Activated CD8-positive, alpha-beta T cell treated with anti-CD3 and anti-CD28 coated beads, Interleukin-2, amount 10 ng/mL, durations not matched to agents 7 days and 5 days (primary cell): ENCODE measurements at regions of chr6 and their contacts with region 1.

Region 1: DNA sequence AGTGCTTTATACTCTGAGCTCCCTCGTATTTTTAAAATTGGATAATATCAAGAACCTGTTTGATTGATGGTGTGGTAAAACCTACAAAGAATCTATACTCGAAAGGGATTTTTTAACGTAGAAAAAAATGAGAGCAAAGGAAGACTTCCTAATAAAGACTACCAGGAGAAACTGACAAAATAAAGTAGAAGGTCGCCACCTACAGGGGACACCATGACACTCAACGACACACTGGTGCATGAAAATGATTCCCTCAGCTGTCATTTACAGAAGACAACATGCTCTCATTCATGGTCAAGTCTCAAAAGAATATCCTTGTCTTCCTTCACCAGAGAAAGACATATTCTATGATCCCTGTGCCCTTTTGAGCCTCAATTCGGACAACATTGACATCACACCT is 10.1 kb upstream of the NHSL1 start:
- DNase-seq: peak; percentile 68
- ATAC-seq: peak; percentile 75
- H3K4me3 Mint-ChIP-seq: no peak overlapping the region
- H3K27ac Mint-ChIP-seq: no peak overlapping the region
- H3K4me1 Mint-ChIP-seq: peaks cover 5% of the 10 kb centered on the region
- H3K27me3 Mint-ChIP-seq: peaks cover 30% of the 10 kb centered on the region

Region 2: DNA sequence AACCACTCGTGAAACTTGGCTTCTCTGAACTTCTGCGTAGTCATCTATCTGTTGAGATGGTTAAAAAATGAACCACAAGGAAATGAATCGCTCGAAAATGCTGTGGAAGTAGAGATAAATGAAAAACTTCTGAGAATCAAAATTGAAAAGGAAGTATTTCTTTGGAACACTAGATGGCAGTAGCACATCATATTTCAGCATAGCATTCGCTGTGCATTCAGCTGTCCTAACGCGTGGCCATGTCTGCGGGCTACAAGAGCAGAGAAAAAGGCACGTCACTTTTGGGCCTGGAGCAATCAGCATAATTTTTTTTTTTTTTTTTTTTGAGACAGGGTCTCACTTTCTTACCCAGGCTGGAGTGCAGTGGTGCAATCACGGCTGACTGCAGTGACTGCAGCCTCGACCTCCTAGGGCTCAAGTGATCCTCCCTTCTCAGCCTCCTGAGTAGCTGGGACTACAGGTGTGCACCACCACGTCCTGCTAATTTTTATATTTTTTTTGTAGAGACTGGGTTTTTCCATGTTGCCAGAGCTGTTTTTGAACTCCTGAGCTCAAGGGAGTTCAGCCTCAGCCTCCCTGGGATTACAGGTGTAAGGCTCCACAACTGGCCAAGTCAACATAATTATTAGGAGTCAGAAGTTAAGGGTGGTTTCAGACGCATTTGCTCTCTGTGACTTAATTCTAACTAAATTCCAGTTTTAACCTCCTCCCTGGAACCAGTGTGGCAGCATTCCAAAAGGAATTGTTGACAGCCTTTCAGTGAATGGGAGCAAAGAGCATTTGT is 393.3 kb before region 1 on chr6:
- CTCF ChIA-PET with region 1: interaction called, 32 read pairs
- POLR2A ChIA-PET with region 1: no interaction called
- DNase-seq: peak; percentile 58
- ATAC-seq: peak; percentile 83
- H3K4me3 Mint-ChIP-seq: no peak overlapping the region
- H3K27ac Mint-ChIP-seq: no peak overlapping the region
- H3K4me1 Mint-ChIP-seq: peaks cover 6% of the 10 kb centered on the region
- H3K27me3 Mint-ChIP-seq: peaks cover 49% of the 10 kb centered on the region

Region 3: DNA sequence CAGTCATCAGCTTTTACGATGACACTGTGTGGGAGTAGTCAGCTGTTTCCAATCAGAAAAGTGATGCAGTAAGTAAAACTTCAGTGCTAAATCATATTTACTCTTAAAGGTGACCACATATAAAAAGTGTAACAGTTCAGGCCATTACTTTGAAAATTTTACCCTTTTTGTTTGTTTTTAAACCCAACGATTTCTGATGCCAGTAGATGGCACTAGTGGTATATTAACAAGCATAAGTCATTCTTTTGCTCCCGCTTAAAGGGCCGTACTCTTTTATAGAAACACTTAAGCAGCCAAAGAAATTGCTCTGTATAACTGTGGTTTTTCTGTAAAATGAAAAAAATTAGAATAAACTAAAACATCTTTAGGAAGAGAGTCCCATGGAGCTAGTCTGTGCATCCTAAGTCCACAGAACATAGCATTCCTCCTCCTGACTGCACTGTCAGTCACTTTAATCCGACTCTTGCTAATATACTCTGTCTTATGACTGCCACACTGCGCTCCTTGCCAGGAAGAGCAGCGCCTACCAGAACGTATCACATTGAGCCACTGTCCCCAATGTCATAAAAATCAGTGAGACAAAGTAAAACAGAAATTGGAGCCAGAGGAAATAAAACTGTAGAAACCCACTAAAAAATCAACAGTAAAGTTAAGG is 80.3 kb before region 1 on chr6:
- CTCF ChIA-PET with region 1: interaction called, 120 read pairs
- POLR2A ChIA-PET with region 1: interaction called, 3 read pairs
- DNase-seq: peak; percentile 34
- ATAC-seq: peak; percentile 58
- H3K4me3 Mint-ChIP-seq: no peak overlapping the region
- H3K27ac Mint-ChIP-seq: no peak overlapping the region
- H3K4me1 Mint-ChIP-seq: peaks cover 2% of the 10 kb centered on the region
- H3K27me3 Mint-ChIP-seq: no peaks in the 10 kb centered on the region

Region 4: GRCh38 chr6:138440758-138441357 is 68.5 kb before region 1 on chr6:
- CTCF ChIA-PET with region 1: interaction called, 18 read pairs
- POLR2A ChIA-PET with region 1: no interaction called
- DNase-seq: no peak
- ATAC-seq: no peak
- H3K4me3 Mint-ChIP-seq: no peak overlapping the region
- H3K27ac Mint-ChIP-seq: no peak overlapping the region
- H3K4me1 Mint-ChIP-seq: no peaks in the 10 kb centered on the region
- H3K27me3 Mint-ChIP-seq: peaks cover 2% of the 10 kb centered on the region

Region 5: DNA sequence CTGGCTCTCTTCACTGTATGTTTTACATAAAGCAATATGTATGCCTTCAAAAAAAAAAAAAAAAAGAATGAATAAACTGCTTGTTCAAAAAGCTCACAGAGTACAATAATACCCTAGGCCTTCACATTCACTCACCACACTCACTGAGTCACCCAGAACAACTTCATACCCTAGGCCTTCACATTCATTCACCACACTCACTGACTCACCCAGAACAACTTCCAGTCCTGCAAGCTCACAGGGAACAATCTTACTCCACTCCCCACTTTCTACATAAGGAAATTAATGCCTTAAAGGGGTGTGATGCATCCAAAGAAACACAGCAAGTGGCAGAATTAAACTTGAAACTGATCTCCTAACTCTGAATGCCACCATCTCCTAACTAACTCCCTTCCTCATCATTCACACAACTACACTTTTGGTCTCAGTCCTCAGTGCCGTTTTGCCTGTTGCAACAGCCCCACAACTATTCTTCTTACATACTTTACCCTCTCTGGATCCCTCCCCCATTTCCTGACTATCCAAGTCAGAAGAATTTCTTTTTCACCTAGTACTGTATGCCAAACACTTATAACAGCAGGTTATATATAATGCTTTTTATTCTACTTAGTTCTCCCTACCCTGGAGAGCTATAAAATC is 44.2 kb before region 1 on chr6:
- CTCF ChIA-PET with region 1: interaction called, 11 read pairs
- POLR2A ChIA-PET with region 1: no interaction called
- DNase-seq: no peak
- ATAC-seq: no peak
- H3K4me3 Mint-ChIP-seq: no peak overlapping the region
- H3K27ac Mint-ChIP-seq: no peak overlapping the region
- H3K4me1 Mint-ChIP-seq: peaks cover 5% of the 10 kb centered on the region
- H3K27me3 Mint-ChIP-seq: peaks cover 2% of the 10 kb centered on the region

Region 6: GRCh38 chr6:138622967-138623366 is 113.6 kb after region 1 on chr6:
- CTCF ChIA-PET with region 1: no interaction called
- POLR2A ChIA-PET with region 1: no interaction called
- DNase-seq: no peak
- ATAC-seq: no peak
- H3K4me3 Mint-ChIP-seq: no peak overlapping the region
- H3K27ac Mint-ChIP-seq: no peak overlapping the region
- H3K4me1 Mint-ChIP-seq: no peaks in the 10 kb centered on the region
- H3K27me3 Mint-ChIP-seq: peaks cover 3% of the 10 kb centered on the region

Region 7: GRCh38 chr6:138869398-138869797 is 360.0 kb after region 1 on chr6:
- CTCF ChIA-PET with region 1: no interaction called
- POLR2A ChIA-PET with region 1: no interaction called
- DNase-seq: no peak
- ATAC-seq: no peak
- H3K4me3 Mint-ChIP-seq: no peak overlapping the region
- H3K27ac Mint-ChIP-seq: no peak overlapping the region
- H3K4me1 Mint-ChIP-seq: no peaks in the 10 kb centered on the region
- H3K27me3 Mint-ChIP-seq: no peaks in the 10 kb centered on the region